ENCODE measurements at regions of chr13 and their contacts with region 1.

Region 1: DNA sequence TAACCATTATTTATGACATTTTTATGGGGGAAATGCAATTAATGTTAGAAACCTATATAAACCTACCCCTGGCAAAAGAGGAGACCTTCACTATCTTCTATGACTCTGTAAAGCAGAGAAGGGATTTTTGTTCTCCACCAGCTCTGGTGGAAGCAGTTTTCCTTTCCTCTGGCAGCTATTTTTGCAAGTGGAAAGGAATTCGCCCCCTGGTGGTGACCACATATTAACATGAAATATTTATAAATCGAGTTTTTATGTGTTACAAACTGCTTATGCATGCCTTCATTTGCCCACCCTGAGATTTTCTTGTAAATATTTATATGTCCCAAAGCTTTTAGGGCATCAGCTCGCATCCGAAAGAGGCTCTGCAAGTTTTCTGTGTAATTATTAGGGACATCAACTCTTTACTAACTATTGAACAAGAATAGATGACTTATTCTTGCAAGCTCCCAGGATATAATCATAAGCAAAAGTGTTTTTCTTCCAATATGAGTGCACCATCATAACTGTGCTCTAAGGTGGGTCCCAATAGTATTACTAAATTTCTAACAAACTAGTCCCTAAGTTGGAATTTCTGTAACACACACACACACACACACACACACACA is 62.4 kb downstream of the SERTM1 start:
- DNase-seq: peak; percentile 37
- H3K4me3 ChIP-seq: peak overlapping the region in 1 of 2 experiments; percentile 11; a peak in 1 of 4 replicates
- H3K27ac ChIP-seq: no peak overlapping the region
- H3K4me1 ChIP-seq: no peaks in the 10 kb centered on the region; a peak in 1 of 4 replicates
- H3K27me3 ChIP-seq: no peaks in the 10 kb centered on the region
- CTCF ChIP-seq: peak; percentile 78
- EP300 ChIP-seq: no peak
- RAD21 ChIP-seq: peak; percentile 75

Region 2: DNA sequence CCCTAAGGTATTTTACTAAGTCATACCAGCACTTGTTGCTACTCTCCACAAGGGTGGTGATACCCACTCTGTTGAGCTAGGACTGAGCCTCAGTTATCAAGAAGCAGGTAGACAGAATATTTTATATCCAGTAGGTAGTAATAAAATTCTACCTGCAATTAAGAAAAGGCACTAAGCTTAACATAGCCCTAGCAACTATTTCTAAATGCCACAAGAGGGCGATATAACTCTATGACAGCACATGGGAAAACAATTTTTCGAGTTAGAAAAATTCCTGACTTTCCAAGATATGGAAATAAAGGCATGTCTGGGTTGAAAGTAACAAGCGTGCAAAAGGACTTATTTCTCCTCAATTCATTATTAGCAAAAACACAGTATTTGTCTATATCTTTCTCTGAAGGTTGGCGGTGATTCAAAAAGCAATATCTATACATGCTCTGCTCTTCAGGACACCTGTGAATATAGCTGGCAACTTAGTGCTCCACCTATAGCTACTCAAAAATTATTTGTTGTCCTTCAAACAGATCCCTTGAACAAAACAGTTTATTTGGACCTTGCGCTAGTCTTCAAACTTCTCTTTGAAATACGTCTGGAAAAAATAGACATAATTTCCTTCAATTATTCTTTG is 453.3 kb before region 1 on chr13:
- CTCF ChIA-PET with region 1: interaction called, 25 read pairs
- POLR2A ChIA-PET with region 1: no interaction called
- DNase-seq: peak; percentile 44
- H3K4me3 ChIP-seq: no peak overlapping the region; a peak in 1 of 4 replicates
- H3K27ac ChIP-seq: no peak overlapping the region
- H3K4me1 ChIP-seq: no peaks in the 10 kb centered on the region; a peak in 1 of 4 replicates
- H3K27me3 ChIP-seq: no peaks in the 10 kb centered on the region
- CTCF ChIP-seq: peak; percentile 92
- EP300 ChIP-seq: no peak
- RAD21 ChIP-seq: peak; percentile 88

Region 3: GRCh38 chr13:36420437-36420891 is 315.8 kb before region 1 on chr13:
- CTCF ChIA-PET with region 1: interaction called, 43 read pairs
- POLR2A ChIA-PET with region 1: no interaction called
- DNase-seq: peak; percentile 79
- H3K4me3 ChIP-seq: no peak overlapping the region; a peak in 2 of 4 replicates
- H3K27ac ChIP-seq: no peak overlapping the region
- H3K4me1 ChIP-seq: peaks cover 0 to 3% of the 10 kb centered on the region in 2 experiments; a peak in 2 of 4 replicates
- H3K27me3 ChIP-seq: no peaks in the 10 kb centered on the region
- CTCF ChIP-seq: peak; percentile 93
- EP300 ChIP-seq: no peak
- RAD21 ChIP-seq: peak; percentile 83

Region 4: GRCh38 chr13:36717966-36718545 is 18.2 kb before region 1 on chr13:
- CTCF ChIA-PET with region 1: interaction called, 13 read pairs
- POLR2A ChIA-PET with region 1: no interaction called
- DNase-seq: no peak
- H3K4me3 ChIP-seq: no peak overlapping the region
- H3K27ac ChIP-seq: no peak overlapping the region
- H3K4me1 ChIP-seq: peaks cover 0 to 18% of the 10 kb centered on the region in 2 experiments; a peak in 1 of 4 replicates
- H3K27me3 ChIP-seq: no peaks in the 10 kb centered on the region
- CTCF ChIP-seq: no peak
- EP300 ChIP-seq: no peak
- RAD21 ChIP-seq: no peak

Region 5: DNA sequence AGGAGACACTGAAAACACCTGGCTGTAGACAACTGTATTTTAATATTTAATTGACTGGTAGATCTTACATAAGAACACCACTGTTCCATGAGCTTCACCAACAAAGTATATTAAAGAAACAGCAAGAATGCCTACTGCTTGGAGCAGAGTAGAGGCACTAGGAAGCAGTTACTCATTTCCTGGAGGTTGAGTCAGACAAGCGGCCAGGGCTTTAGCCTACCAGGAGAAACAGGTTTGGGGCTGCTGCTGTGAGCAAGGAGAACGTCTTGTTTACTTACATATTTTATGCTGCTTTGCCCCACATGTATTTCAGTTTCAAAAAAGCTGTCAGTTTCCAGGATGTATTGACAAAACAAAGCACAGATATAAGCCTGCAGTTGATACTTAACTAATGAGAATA is 229.6 kb after region 1 on chr13:
- CTCF ChIA-PET with region 1: no interaction called
- POLR2A ChIA-PET with region 1: no interaction called
- DNase-seq: no peak
- H3K4me3 ChIP-seq: no peak overlapping the region
- H3K27ac ChIP-seq: peak overlapping the region in 1 of 2 experiments; percentile 79; a peak in 2 of 4 replicates
- H3K4me1 ChIP-seq: peaks cover 0 to 15% of the 10 kb centered on the region in 2 experiments; a peak in 1 of 4 replicates
- H3K27me3 ChIP-seq: no peaks in the 10 kb centered on the region
- CTCF ChIP-seq: no peak
- EP300 ChIP-seq: no peak
- RAD21 ChIP-seq: no peak

Measured in SK-N-SH (cell line).